Activated CD4-positive, alpha-beta T cell treated with anti-CD3 and anti-CD28 coated beads for 36 hours (primary cell): ENCODE measurements at regions of chr14 and their contacts with region 1.

Region 1: DNA sequence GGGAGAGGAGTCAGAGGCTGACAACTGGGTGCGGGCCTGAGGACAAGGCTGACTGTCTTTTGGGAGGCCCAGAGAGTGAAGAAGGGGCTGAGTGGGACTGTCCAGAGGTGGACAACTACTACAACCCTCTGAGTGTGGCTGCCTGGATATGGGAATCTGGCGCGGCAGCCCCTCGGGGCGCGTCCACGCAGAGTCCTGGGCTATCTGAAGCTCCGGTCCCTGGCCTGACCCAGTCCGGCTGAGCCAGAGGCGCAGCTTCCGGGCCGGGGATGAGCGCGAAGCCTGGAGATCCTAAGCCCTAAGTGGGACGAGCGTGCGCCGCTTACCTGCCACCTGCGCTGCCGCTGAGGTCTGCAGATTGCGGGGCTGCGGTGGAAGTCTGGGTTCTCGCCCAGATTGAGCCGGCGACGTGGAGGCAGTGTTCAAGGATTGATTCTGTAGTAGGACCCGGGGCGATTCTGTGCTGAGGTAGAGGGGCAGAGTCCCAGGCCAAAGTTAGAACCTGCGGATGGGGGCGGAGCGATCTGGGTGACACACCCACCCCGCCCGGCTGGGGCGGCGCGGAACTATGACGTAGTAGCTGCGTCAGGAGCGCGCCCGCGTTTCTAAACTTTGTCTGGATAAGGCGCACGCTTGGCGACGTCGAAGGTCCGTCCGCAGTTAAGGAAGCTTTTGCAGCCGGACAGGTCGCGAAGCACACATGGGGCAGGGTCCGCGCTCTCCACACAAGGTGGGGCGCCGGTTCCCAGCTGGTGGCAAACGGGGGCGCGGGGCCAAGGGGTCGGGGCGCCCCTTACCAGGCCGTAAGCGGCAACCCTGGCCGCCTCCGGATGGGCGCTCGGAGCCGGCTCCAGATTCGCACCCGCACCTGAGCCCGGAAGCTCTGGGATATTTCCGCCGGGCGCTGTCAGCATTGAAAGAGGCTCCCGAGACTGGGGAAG is at the starts of genes DHRS1 and NOP9:
- DNase-seq: peak; percentile 96
- ATAC-seq: peak; percentile 67
- H3K4me3 Mint-ChIP-seq: peak within 1 kb of the TSS; percentile 91
- H3K27ac Mint-ChIP-seq: peak within 1 kb of the TSS; percentile 77
- H3K4me1 Mint-ChIP-seq: peaks cover 51% of the 10 kb centered on the region
- H3K27me3 Mint-ChIP-seq: no peaks in the 10 kb centered on the region
- total RNA-seq, gene DHRS1: 11.7 to 14.6 TPM
- total RNA-seq, gene NOP9: 24.4 to 32.5 TPM

Region 2: DNA sequence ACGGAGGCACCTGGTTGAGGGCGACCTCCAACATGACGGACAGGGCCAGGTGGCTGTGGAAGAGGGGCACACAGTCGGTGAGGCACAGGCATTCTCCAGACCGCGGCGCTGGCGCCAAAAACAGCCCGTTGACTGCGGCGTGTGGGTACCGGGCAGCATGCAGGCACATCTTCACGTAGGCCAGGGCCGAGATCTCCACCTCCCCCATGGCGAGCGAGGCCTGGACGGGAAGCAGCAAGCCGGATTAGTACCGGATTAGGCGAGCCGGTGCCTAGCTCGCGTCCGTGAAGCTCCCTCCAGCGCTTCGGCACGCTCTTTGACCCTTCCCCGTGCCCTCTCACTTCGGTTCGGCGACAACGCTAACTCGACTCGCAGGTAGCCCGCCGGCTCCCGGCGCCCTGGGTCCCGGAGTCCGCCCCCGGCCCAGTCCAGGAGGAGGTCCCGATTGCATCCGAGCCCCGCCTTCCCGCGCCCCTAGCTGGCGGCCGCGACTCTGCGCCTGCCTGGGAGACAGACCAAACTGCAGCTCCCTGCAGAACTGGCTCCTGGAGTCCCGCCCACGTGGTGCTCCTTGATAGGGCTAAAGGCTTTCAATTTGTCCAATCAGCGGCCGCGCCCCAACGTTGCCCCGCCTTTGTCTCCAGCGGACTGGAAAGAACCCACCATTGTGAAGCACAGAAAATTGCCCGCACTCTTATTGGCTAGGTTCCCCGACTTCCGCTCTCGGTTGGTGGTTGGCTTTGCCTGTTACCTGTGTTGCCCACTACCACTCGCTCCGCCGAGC is 158.2 kb before region 1 on chr14 and contains the start of gene EMC9:
- CTCF ChIA-PET with region 1: interaction called, 3 read pairs
- POLR2A ChIA-PET with region 1: no interaction called
- intact Hi-C with region 1: loop called (anchors 2 to 5 kb)
- DNase-seq: peak; percentile 100
- ATAC-seq: peak; percentile 87
- H3K4me3 Mint-ChIP-seq: peak within 1 kb of the TSS; percentile 88
- H3K27ac Mint-ChIP-seq: peak within 1 kb of the TSS; percentile 97
- H3K4me1 Mint-ChIP-seq: peaks cover 66% of the 10 kb centered on the region
- H3K27me3 Mint-ChIP-seq: no peaks in the 10 kb centered on the region
- total RNA-seq, gene EMC9: 36.9 to 46.7 TPM

Region 3: GRCh38 chr14:24195191-24196070 is 104.1 kb before region 1 on chr14 and contains the start of gene TM9SF1:
- CTCF ChIA-PET with region 1: interaction called, 5 read pairs
- POLR2A ChIA-PET with region 1: no interaction called
- intact Hi-C with region 1: loop called in 1 of 2 experiments (anchors 1 kb)
- DNase-seq: peak; percentile 93
- ATAC-seq: peak; percentile 93
- H3K4me3 Mint-ChIP-seq: peak within 1 kb of the TSS; percentile 90
- H3K27ac Mint-ChIP-seq: peak within 1 kb of the TSS; percentile 93
- H3K4me1 Mint-ChIP-seq: peaks cover 50% of the 10 kb centered on the region
- H3K27me3 Mint-ChIP-seq: no peaks in the 10 kb centered on the region
- total RNA-seq, gene TM9SF1: 17.0 to 24.4 TPM

Region 4: DNA sequence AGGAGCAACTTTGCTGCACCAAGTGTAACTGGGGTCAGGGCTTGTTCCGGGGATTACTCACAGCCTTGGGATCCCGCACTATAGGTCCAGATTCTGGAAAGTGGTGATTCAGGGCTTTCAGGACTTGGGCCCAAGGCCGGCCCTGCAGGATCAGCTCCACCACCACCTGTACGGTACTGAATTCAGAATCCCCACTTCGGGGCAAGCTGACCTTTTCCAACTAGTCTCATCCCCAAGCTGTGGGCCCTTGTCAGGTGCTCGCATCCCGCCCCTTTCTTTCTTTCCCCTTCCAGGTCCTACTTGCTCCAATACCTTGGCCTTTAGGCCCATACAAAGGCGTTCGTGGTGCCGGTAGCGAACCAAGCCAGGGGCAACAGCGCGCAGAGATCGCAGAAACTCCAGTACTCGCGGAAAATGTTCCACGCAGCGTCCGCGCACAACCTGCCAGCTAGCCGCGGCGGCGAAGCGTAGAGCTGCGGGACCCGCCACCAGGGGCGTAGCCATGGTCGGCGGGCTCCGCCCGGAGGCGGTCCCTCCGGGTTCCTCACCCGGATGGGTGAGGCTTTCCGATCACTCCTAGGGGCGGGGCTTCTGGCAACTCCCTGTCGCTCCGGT is 57.6 kb before region 1 on chr14:
- CTCF ChIA-PET with region 1: interaction called, 430 read pairs
- POLR2A ChIA-PET with region 1: interaction called, 12 read pairs
- intact Hi-C with region 1: loop called (anchors 1 kb)
- DNase-seq: peak; percentile 97
- ATAC-seq: peak; percentile 83
- H3K4me3 Mint-ChIP-seq: peak overlapping the region; percentile 94
- H3K27ac Mint-ChIP-seq: peak overlapping the region; percentile 99
- H3K4me1 Mint-ChIP-seq: peaks cover 55% of the 10 kb centered on the region
- H3K27me3 Mint-ChIP-seq: no peaks in the 10 kb centered on the region

Region 5: GRCh38 chr14:24332268-24332993 is 32.9 kb after region 1 on chr14:
- CTCF ChIA-PET with region 1: interaction called, 19 read pairs
- POLR2A ChIA-PET with region 1: interaction called, 3 read pairs
- intact Hi-C with region 1: no loop called
- DNase-seq: peak; percentile 91
- ATAC-seq: peak; percentile 82
- H3K4me3 Mint-ChIP-seq: peak overlapping the region; percentile 53
- H3K27ac Mint-ChIP-seq: peak overlapping the region; percentile 29
- H3K4me1 Mint-ChIP-seq: peaks cover 27% of the 10 kb centered on the region
- H3K27me3 Mint-ChIP-seq: peaks cover 24% of the 10 kb centered on the region